Mammary epithelial cell (primary cell): ENCODE measurements at regions of chr7 and their contacts with region 1.

Region 1: DNA sequence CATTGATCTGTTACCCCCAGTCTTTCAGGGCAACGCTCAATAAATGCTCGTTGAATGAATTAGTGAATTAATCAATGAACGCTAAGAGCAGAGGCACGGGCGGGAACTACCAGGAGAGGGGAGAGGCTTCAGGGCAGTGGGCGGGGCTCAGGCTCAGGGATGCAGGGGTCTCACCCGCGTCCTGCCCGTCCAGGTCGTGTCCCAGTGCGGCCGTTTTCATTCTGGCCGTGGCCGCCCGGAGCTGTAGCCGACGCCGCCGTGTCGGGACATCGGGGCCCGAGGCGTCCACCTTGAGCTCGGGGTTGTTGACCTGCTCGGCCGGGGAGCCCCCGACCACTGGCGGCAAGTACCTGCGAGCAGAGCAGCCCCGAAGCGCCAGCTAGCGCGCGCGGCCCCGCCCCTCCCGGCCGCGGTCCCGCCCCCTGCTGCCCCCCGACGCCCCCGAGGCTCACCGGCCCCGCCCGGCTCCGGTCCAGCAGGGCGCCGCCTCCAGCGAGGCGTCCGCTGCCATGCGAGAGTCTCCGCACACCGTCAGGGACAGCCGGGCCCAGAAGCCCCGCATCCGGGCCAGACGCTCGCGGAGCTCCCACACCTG is 2.8 kb upstream of the GAL3ST4 start:
- DNase-seq: no peak
- H3K4me3 ChIP-seq: peak overlapping the region in 1 of 3 experiments; percentile 30
- H3K27ac ChIP-seq: no peak overlapping the region
- H3K4me1 ChIP-seq: peaks cover 10% of the 10 kb centered on the region
- H3K27me3 ChIP-seq: no peaks in the 10 kb centered on the region
- CTCF ChIP-seq: no peak

Region 2: GRCh38 chr7:99109108-99110051 is 1061.8 kb before region 1 on chr7:
- CTCF ChIA-PET with region 1: no interaction called
- dilution Hi-C with region 1: no loop called
- in situ Hi-C with region 1: no loop called
- intact Hi-C with region 1: loop called (anchors 10 kb)
- DNase-seq: no peak
- H3K4me3 ChIP-seq: no peak overlapping the region
- H3K27ac ChIP-seq: no peak overlapping the region
- H3K4me1 ChIP-seq: peaks cover 51% of the 10 kb centered on the region
- H3K27me3 ChIP-seq: no peaks in the 10 kb centered on the region
- CTCF ChIP-seq: no peak

Region 3: DNA sequence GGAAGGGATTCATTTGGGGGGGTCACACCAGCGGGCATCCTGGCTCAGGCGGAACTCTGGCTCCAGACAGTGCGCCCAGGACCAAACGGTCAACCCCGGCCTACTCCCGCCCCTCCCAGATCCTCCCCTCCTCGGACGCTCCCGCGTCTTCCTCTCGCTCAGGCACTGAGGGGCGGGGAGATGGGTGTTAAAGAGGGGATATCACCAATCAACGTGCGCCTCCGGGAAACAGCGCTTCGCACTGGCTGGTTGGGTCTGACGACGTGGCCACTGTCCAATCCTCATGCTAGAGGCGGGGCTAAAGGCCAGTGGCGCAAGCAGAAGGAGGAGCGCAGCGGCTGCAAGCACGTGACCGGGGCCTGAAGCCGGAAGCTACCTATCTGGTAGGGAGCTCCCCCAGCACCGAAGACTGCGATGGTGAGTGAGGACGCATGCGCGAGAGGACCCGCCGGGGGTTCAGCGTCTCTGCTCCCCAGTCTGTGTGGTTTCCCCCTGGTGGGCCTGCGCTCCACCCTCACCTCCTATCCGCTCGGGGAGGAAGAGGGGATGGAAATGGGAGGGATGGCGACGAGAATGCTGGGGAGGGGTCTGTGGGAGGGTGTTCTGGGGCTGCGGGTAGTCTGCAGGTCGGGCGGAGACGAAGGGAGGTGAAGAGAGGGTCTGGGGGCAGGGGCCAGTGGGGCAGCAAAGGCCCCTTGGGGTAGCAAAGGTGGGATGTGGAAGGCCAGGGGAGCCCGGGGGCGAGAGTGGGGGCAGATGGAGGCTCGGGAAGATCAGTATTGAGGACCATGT is 22.4 kb before region 1 on chr7 and contains the start of gene LAMTOR4:
- CTCF ChIA-PET with region 1: no interaction called
- dilution Hi-C with region 1: no loop called
- in situ Hi-C with region 1: no loop called
- intact Hi-C with region 1: loop called (anchors 1 kb)
- DNase-seq: peak; percentile 98
- H3K4me3 ChIP-seq: peak within 1 kb of the TSS; percentile 82 to 91 (median 83)
- H3K27ac ChIP-seq: peak within 1 kb of the TSS; percentile 20
- H3K4me1 ChIP-seq: peaks cover 8% of the 10 kb centered on the region
- H3K27me3 ChIP-seq: no peaks in the 10 kb centered on the region
- CTCF ChIP-seq: no peak
- total RNA-seq, gene LAMTOR4: 41.7 to 73.2 TPM

Region 4: GRCh38 chr7:100493476-100494264 is 322.5 kb after region 1 on chr7:
- CTCF ChIA-PET with region 1: no interaction called
- dilution Hi-C with region 1: no loop called
- in situ Hi-C with region 1: no loop called
- intact Hi-C with region 1: no loop called
- DNase-seq: no peak
- H3K4me3 ChIP-seq: no peak overlapping the region
- H3K27ac ChIP-seq: no peak overlapping the region
- H3K4me1 ChIP-seq: no peaks in the 10 kb centered on the region
- H3K27me3 ChIP-seq: no peaks in the 10 kb centered on the region
- CTCF ChIP-seq: no peak